ENCODE measurements at regions of chr7 and their contacts with region 1.

Region 1: DNA sequence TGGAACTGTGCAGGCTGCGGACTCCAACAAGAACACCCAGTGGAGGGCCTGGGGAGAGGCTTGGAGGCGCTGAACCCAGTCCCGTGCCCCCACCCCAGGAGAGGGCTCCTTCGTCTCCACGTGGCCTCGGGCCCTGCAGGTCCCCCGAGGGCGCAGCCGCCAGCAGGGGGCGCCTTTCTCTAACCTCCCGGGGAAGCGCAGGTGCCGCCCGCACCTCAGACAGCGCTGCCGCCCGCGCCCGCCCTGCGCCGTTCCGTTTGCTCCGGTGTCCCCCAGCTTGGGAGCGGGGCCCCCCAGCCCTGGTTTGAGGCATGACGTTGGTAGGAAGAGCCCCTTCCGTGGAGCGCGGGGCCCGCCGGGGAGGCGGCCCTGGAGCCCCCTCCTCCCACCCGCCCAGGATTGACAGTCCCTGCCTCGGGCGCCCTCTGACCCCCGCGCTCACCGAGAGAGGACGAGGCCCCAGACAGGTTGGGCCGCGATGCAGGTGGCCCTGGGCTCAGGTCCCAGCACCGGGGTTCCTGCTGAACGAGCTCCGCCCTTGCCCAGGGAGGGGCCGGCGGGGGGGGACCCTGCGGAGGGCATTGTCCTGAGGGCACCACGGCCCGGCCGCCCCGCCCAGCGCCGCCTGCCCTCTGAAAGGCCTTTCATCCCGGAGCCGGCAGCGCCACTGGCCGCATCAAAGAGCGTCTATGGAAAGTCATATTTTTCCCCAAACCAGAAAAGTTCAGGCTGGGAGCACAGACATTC is 42.8 kb downstream of the FOXL3 start:
- DNase-seq: peak; percentile 97
- ATAC-seq: peak; percentile 100
- H3K4me3 Mint-ChIP-seq: no peak overlapping the region
- H3K27ac Mint-ChIP-seq: no peak overlapping the region
- H3K4me1 Mint-ChIP-seq: peaks cover 8% of the 10 kb centered on the region
- H3K27me3 Mint-ChIP-seq: no peaks in the 10 kb centered on the region

Region 2: GRCh38 chr7:518630-519483 is 186.0 kb after region 1 on chr7:
- CTCF ChIA-PET with region 1: no interaction called
- POLR2A ChIA-PET with region 1: no interaction called
- intact Hi-C with region 1: loop called (anchors 1 to 5 kb)
- DNase-seq: peak; percentile 75
- ATAC-seq: peak; percentile 42
- H3K4me3 Mint-ChIP-seq: peak overlapping the region; percentile 73
- H3K27ac Mint-ChIP-seq: no peak overlapping the region
- H3K4me1 Mint-ChIP-seq: peaks cover 16% of the 10 kb centered on the region
- H3K27me3 Mint-ChIP-seq: peaks cover 37% of the 10 kb centered on the region

Region 3: DNA sequence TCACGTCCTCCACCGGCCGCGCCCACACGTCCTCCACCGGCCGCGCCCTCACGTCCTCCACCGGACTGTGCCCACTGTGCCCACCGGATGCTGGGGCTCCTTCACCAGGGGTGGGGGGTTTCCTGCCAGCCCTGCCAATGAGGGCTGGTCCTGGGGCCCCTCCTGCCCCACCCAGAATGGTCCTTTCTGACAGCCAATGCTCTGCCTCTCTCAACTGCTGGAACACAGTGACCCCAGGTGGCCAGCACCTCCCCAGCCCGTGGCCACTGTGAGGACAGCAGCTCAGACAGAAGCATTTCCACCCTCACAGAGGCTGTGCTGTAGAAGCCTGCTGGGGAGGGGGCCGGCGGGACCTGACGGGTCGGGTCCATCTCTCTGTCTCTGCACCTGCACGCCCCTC is 303.6 kb after region 1 on chr7:
- CTCF ChIA-PET with region 1: interaction called, 4 read pairs
- POLR2A ChIA-PET with region 1: no interaction called
- intact Hi-C with region 1: loop called (anchors 1 to 2 kb)
- DNase-seq: peak; percentile 64
- ATAC-seq: peak; percentile 66
- H3K4me3 Mint-ChIP-seq: no peak overlapping the region
- H3K27ac Mint-ChIP-seq: peak overlapping the region; percentile 37
- H3K4me1 Mint-ChIP-seq: peaks cover 19% of the 10 kb centered on the region
- H3K27me3 Mint-ChIP-seq: no peaks in the 10 kb centered on the region

Region 4: DNA sequence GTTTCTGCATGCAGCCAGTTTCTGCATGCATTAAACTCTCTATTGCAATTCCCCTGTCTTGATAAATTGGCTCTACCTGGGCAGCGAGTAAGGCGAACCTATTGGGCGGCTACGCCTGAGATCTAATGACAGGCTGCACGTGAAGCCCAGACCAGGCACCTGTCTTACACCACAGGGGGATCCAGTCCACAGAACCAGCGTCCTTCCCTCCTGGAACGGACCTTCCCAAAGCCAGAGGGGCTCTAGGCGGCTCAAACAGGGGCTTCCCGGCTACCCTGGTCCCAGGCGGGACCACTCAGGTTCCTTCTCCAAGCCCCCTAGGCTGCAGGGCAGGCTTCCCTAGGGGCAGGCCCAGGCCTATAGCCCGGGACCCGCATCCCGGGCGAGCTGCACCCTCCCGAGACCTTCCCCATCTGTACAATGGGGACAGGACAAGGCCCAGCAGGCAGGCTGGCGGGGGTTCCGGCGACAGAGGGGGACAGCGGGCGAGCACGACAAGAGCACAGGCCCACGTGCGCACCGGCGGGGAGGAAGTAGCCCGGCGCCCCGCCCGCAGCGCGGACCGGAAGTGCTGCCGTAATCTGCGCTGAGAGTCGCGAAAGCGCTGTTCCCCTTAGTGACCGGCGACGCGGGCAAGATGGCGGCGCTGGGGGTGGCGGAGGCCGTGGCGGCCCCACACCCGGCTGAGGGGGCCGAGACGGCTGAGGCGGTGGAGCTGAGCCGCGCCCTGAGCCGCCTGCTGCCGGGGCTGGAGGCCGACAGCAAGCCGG is 393.4 kb after region 1 on chr7 and contains the start of gene DNAAF5:
- CTCF ChIA-PET with region 1: no interaction called
- POLR2A ChIA-PET with region 1: no interaction called
- intact Hi-C with region 1: loop called in 1 of 2 experiments (anchors 2 kb)
- DNase-seq: peak; percentile 93
- ATAC-seq: peak; percentile 89
- H3K4me3 Mint-ChIP-seq: peak within 1 kb of the TSS; percentile 83
- H3K27ac Mint-ChIP-seq: peak within 1 kb of the TSS; percentile 90
- H3K4me1 Mint-ChIP-seq: peaks cover 26% of the 10 kb centered on the region
- H3K27me3 Mint-ChIP-seq: no peaks in the 10 kb centered on the region
- total RNA-seq, gene DNAAF5: 31.5 to 37.2 TPM

Region 5: GRCh38 chr7:732094-732541 is 399.3 kb after region 1 on chr7:
- CTCF ChIA-PET with region 1: interaction called, 3 read pairs
- POLR2A ChIA-PET with region 1: no interaction called
- intact Hi-C with region 1: loop called in 1 of 2 experiments (anchors 1 kb)
- DNase-seq: peak; percentile 48
- ATAC-seq: peak; percentile 34
- H3K4me3 Mint-ChIP-seq: no peak overlapping the region
- H3K27ac Mint-ChIP-seq: no peak overlapping the region
- H3K4me1 Mint-ChIP-seq: peaks cover 12% of the 10 kb centered on the region
- H3K27me3 Mint-ChIP-seq: no peaks in the 10 kb centered on the region

Region 6: DNA sequence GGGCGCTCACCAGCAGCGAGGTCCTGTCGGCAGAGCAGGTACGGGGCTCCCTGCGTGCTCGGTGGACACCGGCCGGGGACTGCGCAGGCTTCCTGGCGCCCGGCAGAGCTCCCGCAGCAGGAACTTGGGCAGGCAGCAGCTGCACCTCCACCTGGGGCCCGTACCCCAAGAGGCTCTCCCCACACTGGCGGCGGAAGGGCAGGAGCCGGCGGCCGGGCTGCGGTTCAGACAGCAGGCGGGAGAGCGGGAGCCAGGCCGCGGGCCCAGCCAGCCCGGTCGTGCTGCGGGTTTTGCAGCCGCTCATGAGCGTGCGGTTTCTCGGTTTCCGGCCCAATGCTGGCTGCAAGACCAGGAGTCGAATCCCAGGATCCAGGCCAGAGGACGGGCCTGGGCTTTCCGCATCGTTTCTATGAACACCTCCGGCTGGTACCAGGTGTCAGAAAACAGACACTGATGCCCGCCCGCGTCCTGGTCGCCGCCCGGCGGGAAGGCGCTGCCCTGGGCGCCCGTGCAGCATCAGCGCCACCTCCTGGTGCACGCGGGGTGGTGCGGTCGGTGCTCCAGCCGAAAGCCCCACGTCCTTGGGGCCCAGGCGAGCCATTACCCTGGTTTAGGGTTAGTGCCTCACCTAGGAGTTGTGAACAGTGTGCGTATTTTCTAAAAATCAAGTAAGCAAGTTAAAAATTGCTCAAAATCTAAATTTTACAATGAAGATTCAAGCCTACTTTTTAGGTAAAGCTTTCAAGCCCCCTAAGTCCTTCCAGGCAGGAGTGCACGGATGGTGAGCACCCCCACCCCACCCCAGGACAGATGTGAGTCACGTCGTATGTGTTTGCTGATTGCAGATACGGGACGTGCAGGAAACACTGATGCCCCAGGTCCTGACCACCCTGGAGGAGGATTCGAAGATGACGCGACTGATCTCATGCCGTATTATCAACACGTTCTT is 441.6 kb after region 1 on chr7:
- CTCF ChIA-PET with region 1: interaction called, 11 read pairs
- POLR2A ChIA-PET with region 1: no interaction called
- intact Hi-C with region 1: loop called in 1 of 2 experiments (anchors 1 kb)
- DNase-seq: peak; percentile 85
- ATAC-seq: peak; percentile 93
- H3K4me3 Mint-ChIP-seq: no peak overlapping the region
- H3K27ac Mint-ChIP-seq: no peak overlapping the region
- H3K4me1 Mint-ChIP-seq: no peaks in the 10 kb centered on the region
- H3K27me3 Mint-ChIP-seq: no peaks in the 10 kb centered on the region